GM18951 (cell line): ENCODE measurements at regions of chr5 and their contacts with region 1.

Region 1: DNA sequence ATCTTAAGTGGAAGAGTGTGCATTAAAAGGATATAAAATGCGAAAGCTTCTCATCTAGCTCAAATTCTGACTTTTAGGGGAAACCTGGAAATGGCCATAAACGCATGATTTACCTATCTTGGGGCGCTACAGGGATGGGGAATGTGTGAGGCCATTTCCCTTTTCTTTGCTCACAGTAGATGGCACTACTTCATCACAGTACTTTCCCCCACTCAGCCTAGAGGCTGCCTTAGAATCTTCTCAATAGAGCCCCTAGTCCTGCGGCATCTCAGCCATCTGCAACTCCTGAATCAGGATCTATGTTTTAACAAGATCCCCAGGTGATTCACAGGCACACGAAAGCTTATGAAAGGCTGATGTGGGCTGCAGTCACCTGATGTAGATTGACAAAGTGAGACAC is 110.8 kb downstream of the LHFPL2 start:
- POLR2A ChIP-seq: no peak

Region 2: GRCh38 chr5:78190402-78190801 is 347.4 kb before region 1 on chr5:
- in situ Hi-C with region 1: no loop called
- POLR2A ChIP-seq: no peak

Region 3: DNA sequence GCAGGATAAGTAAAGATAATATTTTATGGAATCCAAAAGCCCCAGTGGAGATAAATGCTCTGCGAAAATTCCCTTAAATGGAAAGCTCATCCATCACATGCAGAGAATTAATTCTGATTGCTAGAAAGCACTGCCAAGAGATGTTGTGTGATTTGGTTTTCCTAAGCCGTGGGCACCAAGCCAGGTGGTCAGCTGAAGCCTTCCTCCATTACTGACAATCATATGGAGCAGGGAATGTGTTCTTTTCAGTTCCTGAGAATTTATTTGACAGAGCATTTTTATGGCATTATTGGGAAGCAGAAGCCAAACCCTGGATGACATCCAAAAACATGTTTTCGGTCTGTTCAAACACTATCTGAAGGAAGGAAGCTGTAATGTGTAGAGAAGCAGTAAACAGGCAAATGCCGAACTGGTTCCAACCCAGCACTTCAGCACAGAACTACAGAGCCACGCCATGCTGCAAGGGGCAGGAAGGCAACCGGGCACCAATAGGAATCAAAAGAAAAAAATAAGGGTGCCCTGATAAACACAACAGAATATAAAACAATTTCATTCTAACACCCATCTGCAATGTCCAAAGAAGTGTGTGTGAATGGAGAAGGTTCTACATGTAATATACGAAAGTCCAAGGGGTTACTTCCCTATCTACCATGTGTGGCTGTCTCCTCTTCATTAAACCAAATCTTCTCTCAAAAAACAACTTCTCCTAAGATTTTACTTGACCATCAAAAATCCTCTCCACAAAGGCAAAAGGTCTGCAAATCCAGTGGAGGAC is 435.0 kb after region 1 on chr5:
- in situ Hi-C with region 1: loop called (anchors 10 kb)
- POLR2A ChIP-seq: no peak